Activated CD8-positive, alpha-beta T cell treated with anti-CD3 and anti-CD28 coated beads, Interleukin-2, amount 10 ng/mL, durations not matched to agents 7 days and 5 days (primary cell): ENCODE measurements at regions of chr13 and their contacts with region 1.

Region 1: DNA sequence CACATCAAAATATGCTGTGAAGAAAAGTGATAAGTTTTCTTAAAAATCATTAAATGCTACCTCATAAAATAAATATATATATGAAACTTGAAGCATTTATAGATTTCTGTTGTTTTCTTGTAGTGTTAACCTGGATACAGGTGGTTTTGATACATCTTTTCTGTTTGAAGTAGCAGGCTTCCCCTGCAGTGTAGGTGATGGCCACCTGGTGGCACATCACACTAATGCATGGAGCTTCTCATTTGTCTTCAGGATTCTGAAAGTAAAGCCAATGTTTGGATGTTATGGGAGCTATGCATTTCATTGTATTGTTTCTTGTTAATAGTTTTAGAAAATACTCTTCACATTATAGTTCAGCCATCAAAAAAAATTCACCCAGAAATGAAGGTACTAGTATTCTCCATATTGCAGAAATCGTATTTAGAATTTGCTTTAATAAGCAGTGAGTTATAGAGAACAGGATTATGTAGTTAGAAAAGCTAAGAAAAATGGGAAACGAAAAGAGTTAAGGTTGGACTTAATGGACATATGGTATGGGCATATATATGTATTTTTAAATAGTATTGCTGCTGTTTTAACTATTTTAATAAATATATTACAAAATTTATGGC is 18.7 kb downstream of the GPR180 start:
- DNase-seq: peak; percentile 38
- ATAC-seq: peak; percentile 63
- H3K4me3 Mint-ChIP-seq: no peak overlapping the region
- H3K27ac Mint-ChIP-seq: no peak overlapping the region
- H3K4me1 Mint-ChIP-seq: peaks cover 9% of the 10 kb centered on the region
- H3K27me3 Mint-ChIP-seq: no peaks in the 10 kb centered on the region

Region 2: DNA sequence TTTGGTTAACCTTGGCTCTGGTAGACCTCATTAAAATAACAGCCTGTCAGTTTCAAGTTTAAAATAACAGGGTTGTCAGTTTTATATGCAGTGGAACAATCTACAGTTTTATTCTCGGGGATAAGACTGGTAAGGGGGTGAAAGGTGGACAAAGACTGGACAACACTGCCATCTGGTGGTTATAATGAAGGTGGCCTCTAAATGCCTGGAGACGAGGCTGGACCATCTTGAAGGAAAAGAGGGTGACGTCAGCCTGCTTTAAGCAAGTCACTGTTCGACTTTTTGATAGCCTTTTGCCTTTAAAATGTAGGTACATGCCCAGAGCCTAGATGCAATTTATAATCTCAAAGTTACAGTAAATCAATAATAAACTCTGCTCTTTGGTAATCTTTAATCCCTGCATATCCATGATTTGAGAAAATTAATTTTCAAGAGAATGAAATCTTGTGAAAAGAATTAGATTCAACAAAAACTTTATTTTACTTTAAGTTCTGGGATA is 257.9 kb before region 1 on chr13:
- CTCF ChIA-PET with region 1: interaction called, 11 read pairs
- POLR2A ChIA-PET with region 1: no interaction called
- DNase-seq: peak; percentile 80
- ATAC-seq: peak; percentile 96
- H3K4me3 Mint-ChIP-seq: no peak overlapping the region
- H3K27ac Mint-ChIP-seq: no peak overlapping the region
- H3K4me1 Mint-ChIP-seq: peaks cover 1% of the 10 kb centered on the region
- H3K27me3 Mint-ChIP-seq: peaks cover 2% of the 10 kb centered on the region

Region 3: GRCh38 chr13:94435604-94436226 is 184.7 kb before region 1 on chr13:
- CTCF ChIA-PET with region 1: interaction called, 294 read pairs
- POLR2A ChIA-PET with region 1: no interaction called
- DNase-seq: no peak
- ATAC-seq: peak; percentile 58
- H3K4me3 Mint-ChIP-seq: no peak overlapping the region
- H3K27ac Mint-ChIP-seq: no peak overlapping the region
- H3K4me1 Mint-ChIP-seq: peaks cover 25% of the 10 kb centered on the region
- H3K27me3 Mint-ChIP-seq: peaks cover 3% of the 10 kb centered on the region

Region 4: GRCh38 chr13:94595950-94596574 is 24.3 kb before region 1 on chr13 and contains the start of gene TGDS:
- CTCF ChIA-PET with region 1: interaction called, 32 read pairs
- POLR2A ChIA-PET with region 1: interaction called, 5 read pairs
- DNase-seq: peak; percentile 94
- ATAC-seq: peak; percentile 97
- H3K4me3 Mint-ChIP-seq: peak within 1 kb of the TSS; percentile 84
- H3K27ac Mint-ChIP-seq: peak within 1 kb of the TSS; percentile 89
- H3K4me1 Mint-ChIP-seq: peaks cover 43% of the 10 kb centered on the region
- H3K27me3 Mint-ChIP-seq: no peaks in the 10 kb centered on the region
- total RNA-seq, gene TGDS: 17.2 to 19.2 TPM

Region 5: DNA sequence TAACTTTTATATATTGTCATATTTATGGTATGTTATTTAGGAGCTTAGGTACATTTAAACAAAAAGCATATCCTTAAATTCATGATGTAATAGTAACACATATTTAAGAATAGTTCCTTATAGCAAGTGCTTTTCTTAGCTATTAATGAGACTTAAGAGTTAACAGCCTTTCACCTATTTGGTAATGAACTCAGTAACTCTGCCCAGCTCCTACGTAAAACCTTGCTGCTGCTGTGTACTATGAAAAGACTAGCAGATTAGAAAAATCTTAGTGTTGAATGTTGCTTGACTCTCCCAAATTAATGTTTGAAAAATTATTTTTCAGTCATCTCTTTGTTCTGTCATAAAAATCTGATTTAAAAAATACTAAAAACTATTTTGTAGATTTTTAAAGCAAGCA is 11.8 kb before region 1 on chr13:
- CTCF ChIA-PET with region 1: interaction called, 17 read pairs
- POLR2A ChIA-PET with region 1: interaction called, 3 read pairs
- DNase-seq: no peak
- ATAC-seq: no peak
- H3K4me3 Mint-ChIP-seq: no peak overlapping the region
- H3K27ac Mint-ChIP-seq: no peak overlapping the region
- H3K4me1 Mint-ChIP-seq: peaks cover 30% of the 10 kb centered on the region
- H3K27me3 Mint-ChIP-seq: no peaks in the 10 kb centered on the region

Region 6: GRCh38 chr13:94660695-94661326 is 40.4 kb after region 1 on chr13:
- CTCF ChIA-PET with region 1: interaction called, 13 read pairs
- POLR2A ChIA-PET with region 1: no interaction called
- DNase-seq: no peak
- ATAC-seq: no peak
- H3K4me3 Mint-ChIP-seq: no peak overlapping the region
- H3K27ac Mint-ChIP-seq: no peak overlapping the region
- H3K4me1 Mint-ChIP-seq: no peaks in the 10 kb centered on the region
- H3K27me3 Mint-ChIP-seq: peaks cover 24% of the 10 kb centered on the region